Gastrocnemius medialis (tissue), 4 donors: ENCODE measurements at regions of chr4 and their contacts with region 1.

Region 1: DNA sequence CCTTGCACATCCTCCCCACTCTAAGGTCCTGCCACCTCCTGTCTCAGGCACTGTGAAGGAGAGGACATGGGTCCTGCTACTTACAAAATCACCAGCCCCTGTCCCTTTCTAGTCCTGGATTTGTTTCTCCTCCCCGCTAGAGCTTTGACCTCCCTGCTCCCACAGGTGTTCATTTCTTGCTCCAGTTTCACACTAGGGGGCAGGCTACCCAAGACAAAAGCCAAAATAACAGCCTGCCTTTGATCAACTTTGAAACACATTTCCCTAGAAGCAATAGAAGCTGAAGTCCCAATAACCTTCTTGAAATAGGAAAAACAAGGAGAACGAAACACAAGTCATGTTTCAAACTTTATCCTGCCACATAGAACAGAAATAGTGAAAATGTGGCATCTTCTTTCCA is 164.4 kb downstream of the QDPR start:
- DNase-seq: no peak
- ATAC-seq: no peak
- H3K4me3 ChIP-seq: no peak overlapping the region
- H3K27ac ChIP-seq: no peak overlapping the region
- H3K4me1 ChIP-seq: no peaks in the 10 kb centered on the region
- H3K27me3 ChIP-seq: no peaks in the 10 kb centered on the region
- CTCF ChIP-seq: peak in 1 of 5 experiments; percentile 28
- POLR2A ChIP-seq: no peak

Region 2: DNA sequence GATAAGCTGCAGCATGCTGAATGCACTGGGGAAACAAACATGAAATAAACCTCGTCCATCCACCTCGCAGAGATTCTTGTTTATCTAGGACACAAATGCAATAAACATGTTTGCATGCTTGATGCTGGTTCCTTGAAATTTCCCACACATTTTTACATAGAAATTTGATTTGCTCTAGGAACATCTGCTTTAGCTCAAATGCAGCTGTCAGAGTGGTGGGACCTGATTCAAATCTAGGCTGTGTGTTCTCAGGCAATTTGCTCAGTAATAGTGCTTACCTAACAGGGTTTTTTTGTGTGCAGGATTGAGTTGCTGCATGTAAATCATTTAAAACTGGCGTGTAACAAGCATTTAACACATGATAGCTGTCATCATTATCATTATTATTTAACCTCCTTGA is 128.7 kb before region 1 on chr4:
- in situ Hi-C with region 1: no loop called
- intact Hi-C with region 1: no loop called
- DNase-seq: no peak
- ATAC-seq: no peak
- H3K4me3 ChIP-seq: no peak overlapping the region
- H3K27ac ChIP-seq: no peak overlapping the region
- H3K4me1 ChIP-seq: no peaks in the 10 kb centered on the region
- H3K27me3 ChIP-seq: no peaks in the 10 kb centered on the region
- CTCF ChIP-seq: no peak
- POLR2A ChIP-seq: no peak

Region 3: DNA sequence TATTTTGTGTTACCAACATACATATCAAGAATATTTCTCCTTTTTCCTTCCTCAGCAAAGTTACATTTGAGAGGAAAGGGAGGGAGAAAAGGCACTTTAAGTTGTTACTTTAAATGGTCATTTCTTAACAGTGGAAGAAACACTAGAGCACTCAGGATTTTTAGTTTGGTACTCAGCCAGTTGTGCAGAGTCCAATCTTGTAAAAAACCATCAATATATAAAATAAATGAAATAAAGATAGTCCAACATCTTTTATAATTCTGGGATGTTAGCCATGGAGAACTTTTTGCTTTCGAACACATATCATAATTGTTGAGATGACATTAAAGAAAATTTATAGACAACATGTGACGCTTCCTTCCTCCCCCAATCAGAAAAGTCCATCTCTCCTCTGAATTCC is 89.3 kb before region 1 on chr4:
- in situ Hi-C with region 1: no loop called
- intact Hi-C with region 1: no loop called
- DNase-seq: no peak
- ATAC-seq: no peak
- H3K4me3 ChIP-seq: no peak overlapping the region
- H3K27ac ChIP-seq: no peak overlapping the region
- H3K4me1 ChIP-seq: no peaks in the 10 kb centered on the region
- H3K27me3 ChIP-seq: no peaks in the 10 kb centered on the region
- CTCF ChIP-seq: no peak
- POLR2A ChIP-seq: no peak

Region 4: DNA sequence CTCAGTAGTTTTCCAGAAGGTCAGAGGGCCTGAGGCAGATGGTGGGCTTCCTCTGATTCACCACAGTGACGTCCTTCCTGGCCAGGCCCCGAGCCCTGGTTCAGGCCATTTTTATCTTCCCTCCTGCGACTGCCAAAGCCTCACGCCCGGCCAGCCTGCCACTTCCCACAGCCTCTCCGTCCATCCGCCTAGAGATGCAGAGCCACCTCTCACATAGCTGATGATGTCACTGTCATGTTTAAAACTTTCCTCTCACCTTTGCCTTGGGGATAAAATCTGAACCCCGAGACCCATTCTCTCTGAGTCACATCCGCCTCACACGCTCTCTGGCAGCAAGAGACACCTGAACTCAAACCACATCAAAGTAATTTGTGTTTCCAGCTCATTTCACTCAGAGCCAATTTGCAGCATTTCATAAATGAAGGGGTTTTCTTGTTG is 10.9 kb before region 1 on chr4:
- in situ Hi-C with region 1: no loop called
- intact Hi-C with region 1: loop called (anchors 1 kb)
- DNase-seq: no peak
- ATAC-seq: no peak
- H3K4me3 ChIP-seq: no peak overlapping the region
- H3K27ac ChIP-seq: no peak overlapping the region
- H3K4me1 ChIP-seq: no peaks in the 10 kb centered on the region
- H3K27me3 ChIP-seq: no peaks in the 10 kb centered on the region
- CTCF ChIP-seq: no peak
- POLR2A ChIP-seq: no peak